Activated T-helper 1 cell treated with anti-CD3 and anti-CD28 coated beads, Interleukin-12 subunit alpha, Interleukin-12 subunit beta, Interleukin-2, Interleukin-4 antibody, amounts not matched to agents 30 ng/mL and 10 ng/mL and 1 ng/mL, durations not matched to agents 14 hours and 24 hours and 36 hours (primary cell): ENCODE measurements at regions of chr21 and their contacts with region 1.

Region 1: DNA sequence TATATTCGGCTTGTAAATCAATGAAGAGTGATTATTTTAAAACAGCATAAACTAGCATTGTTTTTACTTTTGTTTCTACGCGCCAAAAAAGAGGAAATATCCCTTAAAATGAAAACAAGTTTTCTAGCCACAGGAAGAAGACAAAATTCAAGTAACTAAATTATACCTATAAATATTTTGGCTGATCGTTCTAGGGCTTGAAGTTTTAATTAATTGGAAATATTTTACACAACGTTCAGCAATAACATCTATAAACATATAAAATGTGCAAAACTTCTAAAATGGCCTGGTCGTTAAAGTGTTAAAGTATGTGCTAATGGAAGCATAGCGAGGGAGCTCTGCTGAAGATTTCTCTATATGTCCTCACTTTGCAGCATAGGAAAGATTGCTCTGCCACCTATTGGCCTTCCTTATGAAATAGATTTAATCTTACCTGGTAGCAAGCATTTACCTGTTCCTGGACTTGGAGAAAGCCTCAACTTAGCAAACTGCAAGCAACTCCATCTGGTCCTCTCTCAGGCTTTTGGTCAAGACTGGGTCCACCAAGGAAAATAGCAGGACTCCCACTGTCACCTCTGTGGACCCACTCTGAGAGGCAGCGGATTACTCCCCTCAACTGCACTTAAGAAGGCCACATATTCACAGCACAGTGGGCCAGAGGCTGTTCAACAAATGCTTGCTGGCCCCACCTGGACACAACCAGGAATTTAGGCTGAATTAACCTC is 351.3 kb upstream of the RUNX1 start:
- DNase-seq: peak; percentile 9
- H3K4me3 Mint-ChIP-seq: no peak overlapping the region
- H3K27ac Mint-ChIP-seq: no peak overlapping the region
- H3K4me1 Mint-ChIP-seq: peaks cover 23% of the 10 kb centered on the region
- H3K27me3 Mint-ChIP-seq: no peaks in the 10 kb centered on the region

Region 2: GRCh38 chr21:34801519-34802132 is 598.8 kb before region 1 on chr21:
- intact Hi-C with region 1: loop called (anchors 2 kb)
- DNase-seq: no peak
- H3K4me3 Mint-ChIP-seq: no peak overlapping the region
- H3K27ac Mint-ChIP-seq: no peak overlapping the region
- H3K4me1 Mint-ChIP-seq: peaks cover 40% of the 10 kb centered on the region
- H3K27me3 Mint-ChIP-seq: no peaks in the 10 kb centered on the region

Region 3: GRCh38 chr21:35226948-35227744 is 173.2 kb before region 1 on chr21:
- intact Hi-C with region 1: loop called (anchors 5 kb)
- DNase-seq: peak; percentile 42
- H3K4me3 Mint-ChIP-seq: peak overlapping the region; percentile 27
- H3K27ac Mint-ChIP-seq: peak overlapping the region; percentile 6
- H3K4me1 Mint-ChIP-seq: peaks cover 41% of the 10 kb centered on the region
- H3K27me3 Mint-ChIP-seq: peaks cover 10% of the 10 kb centered on the region